Activated CD4-positive, alpha-beta T cell treated with anti-CD3 and anti-CD28 coated beads, Interleukin-2, amount 10 ng/mL, durations not matched to agents 7 days and 5 days (primary cell): ENCODE measurements at regions of chr2 and their contacts with region 1.

Region 1: DNA sequence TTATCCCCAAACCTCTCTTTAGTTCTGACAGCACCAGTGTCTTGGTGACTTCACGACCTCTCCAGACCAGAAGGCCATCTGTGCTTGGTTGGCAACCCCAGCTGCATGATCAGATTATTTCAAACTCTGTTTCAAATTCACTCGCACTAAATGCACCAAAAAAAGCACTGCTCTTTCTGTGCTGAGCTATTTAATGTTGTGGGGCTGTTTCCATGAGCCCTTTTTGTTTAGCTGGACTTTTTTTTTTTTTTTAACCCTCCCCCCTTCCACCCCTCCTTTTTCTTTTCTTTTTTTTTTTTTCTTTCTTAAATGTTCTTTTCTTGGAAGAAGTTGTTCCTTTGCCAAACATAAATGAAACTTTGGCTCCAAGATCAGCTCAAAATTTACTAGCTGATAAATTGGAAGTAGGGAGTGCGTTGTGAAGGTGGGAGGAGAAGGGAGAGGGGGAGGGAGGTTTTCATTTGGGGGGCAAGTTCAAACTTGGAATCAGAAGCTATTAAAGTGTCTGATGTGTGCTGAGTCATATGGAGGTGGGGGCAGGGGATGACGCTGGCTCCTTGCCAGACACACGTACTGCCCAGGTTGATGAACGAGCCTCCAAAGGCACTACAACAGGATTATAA is 543.0 kb upstream of the TNP1 start:
- DNase-seq: no peak
- H3K4me3 Mint-ChIP-seq: no peak overlapping the region
- H3K27ac Mint-ChIP-seq: no peak overlapping the region
- H3K4me1 Mint-ChIP-seq: peaks cover 9% of the 10 kb centered on the region
- H3K27me3 Mint-ChIP-seq: no peaks in the 10 kb centered on the region

Region 2: DNA sequence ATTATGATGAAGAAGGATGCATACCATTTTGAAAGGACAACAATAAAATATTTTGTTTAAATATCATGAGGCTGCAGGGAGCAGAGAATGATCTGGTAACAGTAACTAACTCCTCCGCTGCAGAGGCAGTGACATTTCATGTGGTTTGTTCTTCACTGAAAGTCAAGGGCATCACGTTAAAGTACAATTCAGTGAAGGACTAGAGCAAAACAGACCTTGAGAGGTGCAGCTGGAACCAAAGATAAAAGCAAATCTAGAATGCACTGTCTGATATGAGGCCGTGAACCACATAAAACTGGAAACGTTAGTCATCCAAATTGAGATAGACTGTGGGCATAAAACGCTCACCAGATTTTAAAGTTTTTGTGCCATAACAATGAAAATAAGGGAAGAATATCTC is 20.1 kb before region 1 on chr2:
- CTCF ChIA-PET with region 1: no interaction called
- POLR2A ChIA-PET with region 1: no interaction called
- DNase-seq: no peak
- H3K4me3 Mint-ChIP-seq: no peak overlapping the region
- H3K27ac Mint-ChIP-seq: no peak overlapping the region
- H3K4me1 Mint-ChIP-seq: no peaks in the 10 kb centered on the region
- H3K27me3 Mint-ChIP-seq: peaks cover 3% of the 10 kb centered on the region

Region 3: GRCh38 chr2:217415316-217415715 is 12.4 kb after region 1 on chr2:
- CTCF ChIA-PET with region 1: no interaction called
- POLR2A ChIA-PET with region 1: no interaction called
- DNase-seq: no peak
- H3K4me3 Mint-ChIP-seq: no peak overlapping the region
- H3K27ac Mint-ChIP-seq: no peak overlapping the region
- H3K4me1 Mint-ChIP-seq: no peaks in the 10 kb centered on the region
- H3K27me3 Mint-ChIP-seq: no peaks in the 10 kb centered on the region

Region 4: GRCh38 chr2:217436386-217436785 is 33.5 kb after region 1 on chr2:
- CTCF ChIA-PET with region 1: no interaction called
- POLR2A ChIA-PET with region 1: interaction called, 11 read pairs
- DNase-seq: no peak
- H3K4me3 Mint-ChIP-seq: no peak overlapping the region
- H3K27ac Mint-ChIP-seq: no peak overlapping the region
- H3K4me1 Mint-ChIP-seq: peaks cover 22% of the 10 kb centered on the region
- H3K27me3 Mint-ChIP-seq: no peaks in the 10 kb centered on the region